ENCODE measurements at regions of chr15 and their contacts with region 1.

Region 1: GRCh38 chr15:38389924-38390542 is 63.9 kb upstream of the FAM98B start:
- DNase-seq: peak; percentile 51
- H3K4me3 ChIP-seq: no peak overlapping the region; a peak in 1 of 4 replicates
- H3K27ac ChIP-seq: no peak overlapping the region
- H3K4me1 ChIP-seq: no peaks in the 10 kb centered on the region
- H3K27me3 ChIP-seq: no peaks in the 10 kb centered on the region
- CTCF ChIP-seq: peak; percentile 80
- EP300 ChIP-seq: no peak
- RAD21 ChIP-seq: peak; percentile 75

Region 2: GRCh38 chr15:37981775-37982174 is 408.3 kb before region 1 on chr15:
- CTCF ChIA-PET with region 1: interaction called, 18 read pairs
- POLR2A ChIA-PET with region 1: no interaction called
- DNase-seq: peak; percentile 30
- H3K4me3 ChIP-seq: no peak overlapping the region
- H3K27ac ChIP-seq: no peak overlapping the region
- H3K4me1 ChIP-seq: peaks cover 0 to 13% of the 10 kb centered on the region in 2 experiments; a peak in 2 of 4 replicates
- H3K27me3 ChIP-seq: no peaks in the 10 kb centered on the region
- CTCF ChIP-seq: peak; percentile 49
- EP300 ChIP-seq: no peak
- RAD21 ChIP-seq: peak; percentile 58

Region 3: DNA sequence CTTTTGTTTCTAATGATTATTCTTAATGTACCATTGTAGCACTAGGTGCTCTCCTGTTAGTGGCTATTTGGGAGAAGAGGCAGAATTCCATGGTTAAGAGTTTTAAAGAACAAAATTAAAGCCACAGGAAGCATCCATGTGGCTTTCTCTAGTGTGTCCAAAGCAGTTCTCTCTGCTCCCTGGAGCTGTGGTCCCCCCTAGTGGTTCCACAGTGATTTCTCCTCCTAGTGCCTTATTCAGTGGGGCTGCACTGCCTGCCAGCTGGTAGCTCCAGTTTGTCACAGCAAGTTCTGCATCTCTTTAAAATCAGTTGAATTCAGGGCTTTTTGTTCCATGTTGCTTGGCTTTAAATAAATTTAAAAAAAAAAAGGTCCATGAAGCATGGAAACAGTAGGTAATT is 24.3 kb after region 1 on chr15:
- CTCF ChIA-PET with region 1: interaction called, 10 read pairs
- POLR2A ChIA-PET with region 1: no interaction called
- DNase-seq: peak; percentile 54
- H3K4me3 ChIP-seq: no peak overlapping the region
- H3K27ac ChIP-seq: no peak overlapping the region
- H3K4me1 ChIP-seq: no peaks in the 10 kb centered on the region
- H3K27me3 ChIP-seq: peaks cover 6% of the 10 kb centered on the region; the same call in 1 of the 2 replicates
- CTCF ChIP-seq: peak; percentile 83
- EP300 ChIP-seq: no peak
- RAD21 ChIP-seq: peak; percentile 75

Region 4: DNA sequence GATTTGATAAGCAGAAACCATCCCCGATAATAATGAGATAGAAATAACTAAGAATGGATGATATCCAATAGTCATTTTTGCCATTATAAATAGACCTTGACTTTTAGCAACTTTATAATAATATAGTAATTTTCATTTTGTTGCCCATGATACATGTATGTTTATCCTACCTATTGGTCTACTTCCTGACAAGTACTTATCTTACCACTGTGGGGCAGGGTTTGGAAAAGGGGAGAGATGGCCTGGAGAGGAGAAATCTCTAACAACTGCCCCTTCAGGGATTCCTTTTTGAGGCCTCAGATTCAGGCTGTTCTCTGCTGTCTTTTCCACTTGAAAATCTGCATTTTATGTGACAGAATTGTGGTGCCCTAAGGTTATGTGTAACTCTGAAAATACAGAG is 106.1 kb after region 1 on chr15:
- CTCF ChIA-PET with region 1: no interaction called
- POLR2A ChIA-PET with region 1: no interaction called
- DNase-seq: no peak
- H3K4me3 ChIP-seq: no peak overlapping the region
- H3K27ac ChIP-seq: no peak overlapping the region
- H3K4me1 ChIP-seq: 0 out of 4 replicates have a peak, but pooled peaks cover 0 to 1% of the 10 kb centered on the region in 2 experiments
- H3K27me3 ChIP-seq: no peaks in the 10 kb centered on the region
- CTCF ChIP-seq: no peak; the same call in 1 of the 2 replicates
- EP300 ChIP-seq: no peak
- RAD21 ChIP-seq: no peak

Measured in SK-N-SH (cell line).